Caco-2 (cell line): ENCODE measurements at regions of chr3 and their contacts with region 1.

Region 1: GRCh38 chr3:171129827-171130226 is 103.3 kb upstream of the SLC2A2 start:
- DNase-seq: no peak
- H3K4me3 ChIP-seq: no peak overlapping the region
- H3K4me3 Mint-ChIP-seq: peak overlapping the region; percentile 54
- H3K27ac Mint-ChIP-seq: peak overlapping the region; percentile 92
- H3K4me1 ChIP-seq: peaks cover 49% of the 10 kb centered on the region
- H3K4me1 Mint-ChIP-seq: peaks cover 27% of the 10 kb centered on the region
- H3K27me3 ChIP-seq: no peaks in the 10 kb centered on the region
- H3K27me3 Mint-ChIP-seq: no peaks in the 10 kb centered on the region
- CTCF ChIP-seq: no peak

Region 2: DNA sequence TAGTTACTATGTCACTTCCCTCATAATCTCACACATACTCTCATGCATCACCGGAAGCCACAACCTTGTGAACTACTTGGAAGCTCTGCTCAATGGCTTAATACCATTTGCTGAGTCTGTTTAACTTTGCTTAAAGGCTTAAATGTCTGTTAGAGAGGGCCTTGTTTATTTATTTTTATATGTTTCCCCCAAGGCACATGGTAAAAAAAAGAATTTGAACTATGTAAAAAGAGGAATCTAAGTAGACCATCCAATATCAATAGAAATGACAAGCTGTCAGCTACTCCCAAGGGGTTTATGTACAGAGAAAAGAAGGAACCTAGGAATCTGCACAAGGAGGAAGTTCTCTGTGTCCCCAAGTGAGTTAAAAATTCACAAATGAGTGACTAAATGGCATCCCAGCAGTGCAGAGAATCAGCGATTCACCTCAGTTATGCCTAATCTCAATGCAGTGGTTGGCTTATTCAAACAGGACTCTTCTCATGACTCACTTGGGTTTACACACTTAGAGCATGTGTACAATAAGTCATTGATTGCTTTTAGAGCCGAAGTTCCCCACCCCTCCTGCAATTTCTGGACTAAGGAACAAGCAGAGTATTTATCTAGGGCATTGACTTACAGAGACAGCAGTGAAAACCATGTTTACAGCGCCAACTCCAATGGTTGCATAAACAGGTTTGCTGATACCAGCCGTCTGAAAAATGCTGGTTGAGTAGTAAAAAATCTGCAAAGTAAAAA is 127.7 kb before region 1 on chr3:
- CTCF ChIA-PET with region 1: no interaction called
- POLR2A ChIA-PET with region 1: no interaction called
- intact Hi-C with region 1: loop called (anchors 1 kb)
- DNase-seq: peak; percentile 84 to 87
- H3K4me3 ChIP-seq: peak overlapping the region; percentile 14; the same call in 1 of the 2 replicates
- H3K4me3 Mint-ChIP-seq: peak overlapping the region; percentile 62
- H3K27ac Mint-ChIP-seq: peak overlapping the region; percentile 61
- H3K4me1 ChIP-seq: peaks cover 62% of the 10 kb centered on the region
- H3K4me1 Mint-ChIP-seq: peaks cover 24% of the 10 kb centered on the region
- H3K27me3 ChIP-seq: no peaks in the 10 kb centered on the region
- H3K27me3 Mint-ChIP-seq: no peaks in the 10 kb centered on the region
- CTCF ChIP-seq: no peak

Region 3: DNA sequence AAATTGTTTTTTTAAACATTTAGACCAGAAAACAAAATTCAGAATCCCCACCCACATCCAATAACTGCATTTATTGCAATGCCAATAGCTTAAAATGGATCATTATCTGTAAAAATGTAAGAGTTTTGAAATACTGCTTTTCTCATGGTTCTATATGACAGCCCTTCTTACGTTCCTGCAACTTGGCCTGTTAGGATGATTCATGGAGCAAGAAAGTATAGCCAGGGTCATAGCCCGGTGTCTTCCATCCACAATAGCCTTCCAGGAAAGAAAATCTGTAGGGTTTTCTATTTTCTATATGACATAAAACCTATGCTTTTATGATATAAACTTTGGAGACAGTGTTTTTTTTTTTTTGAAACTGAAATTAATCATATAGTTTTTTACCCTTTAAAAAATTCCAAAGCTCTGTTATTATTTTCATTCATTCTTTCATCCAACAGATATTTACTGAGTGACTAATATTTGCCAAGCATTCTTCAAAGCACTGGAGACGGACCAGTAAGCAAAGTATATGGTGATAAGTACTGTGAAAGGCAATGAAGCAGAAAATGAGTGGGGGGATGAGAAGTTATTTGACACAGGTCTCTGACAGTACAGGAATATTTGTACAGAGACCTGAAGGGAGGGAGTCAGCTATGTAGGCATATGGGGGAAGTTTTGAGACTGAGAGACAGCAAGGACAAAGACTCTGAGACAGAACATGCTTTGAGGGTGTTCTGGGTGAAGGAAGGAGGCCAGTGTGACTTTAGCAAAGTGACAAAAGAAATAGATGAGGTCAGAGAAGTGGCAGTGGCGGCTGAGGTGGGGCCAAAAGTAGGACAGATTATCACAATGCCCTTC is 74.3 kb before region 1 on chr3:
- CTCF ChIA-PET with region 1: no interaction called
- POLR2A ChIA-PET with region 1: no interaction called
- intact Hi-C with region 1: loop called (anchors 1 kb)
- DNase-seq: peak; percentile 44 to 56
- H3K4me3 ChIP-seq: no peak overlapping the region
- H3K4me3 Mint-ChIP-seq: no peak overlapping the region
- H3K27ac Mint-ChIP-seq: no peak overlapping the region
- H3K4me1 ChIP-seq: peaks cover 73% of the 10 kb centered on the region
- H3K4me1 Mint-ChIP-seq: peaks cover 9% of the 10 kb centered on the region
- H3K27me3 ChIP-seq: no peaks in the 10 kb centered on the region
- H3K27me3 Mint-ChIP-seq: no peaks in the 10 kb centered on the region
- CTCF ChIP-seq: no peak

Region 4: DNA sequence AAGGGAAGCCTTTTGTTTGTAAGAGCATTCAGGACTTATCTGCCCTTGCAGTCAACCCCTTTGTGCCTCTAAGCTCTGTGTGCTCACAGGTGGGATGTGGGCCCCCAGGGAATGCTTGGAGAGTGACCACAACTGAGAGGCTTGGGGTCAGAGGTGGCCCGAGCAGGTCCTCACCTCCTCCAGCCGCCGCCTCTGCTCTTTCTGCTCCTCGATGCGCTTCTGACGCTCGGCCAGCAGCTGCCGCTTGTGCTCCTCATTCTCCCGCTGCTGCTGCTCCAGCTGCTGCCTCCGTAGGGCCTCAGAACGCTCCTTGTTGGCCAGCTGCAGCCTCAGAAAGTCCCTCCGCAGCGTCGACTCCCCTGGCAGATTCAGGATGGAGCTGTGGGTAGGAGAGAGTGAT is 27.5 kb after region 1 on chr3:
- CTCF ChIA-PET with region 1: no interaction called
- POLR2A ChIA-PET with region 1: no interaction called
- intact Hi-C with region 1: loop called (anchors 1 kb)
- DNase-seq: peak; percentile 82 to 89
- H3K4me3 ChIP-seq: no peak overlapping the region
- H3K4me3 Mint-ChIP-seq: no peak overlapping the region
- H3K27ac Mint-ChIP-seq: peak overlapping the region; percentile 97
- H3K4me1 ChIP-seq: peaks cover 31% of the 10 kb centered on the region
- H3K4me1 Mint-ChIP-seq: peaks cover 17% of the 10 kb centered on the region
- H3K27me3 ChIP-seq: no peaks in the 10 kb centered on the region
- H3K27me3 Mint-ChIP-seq: no peaks in the 10 kb centered on the region
- CTCF ChIP-seq: no peak

Region 5: DNA sequence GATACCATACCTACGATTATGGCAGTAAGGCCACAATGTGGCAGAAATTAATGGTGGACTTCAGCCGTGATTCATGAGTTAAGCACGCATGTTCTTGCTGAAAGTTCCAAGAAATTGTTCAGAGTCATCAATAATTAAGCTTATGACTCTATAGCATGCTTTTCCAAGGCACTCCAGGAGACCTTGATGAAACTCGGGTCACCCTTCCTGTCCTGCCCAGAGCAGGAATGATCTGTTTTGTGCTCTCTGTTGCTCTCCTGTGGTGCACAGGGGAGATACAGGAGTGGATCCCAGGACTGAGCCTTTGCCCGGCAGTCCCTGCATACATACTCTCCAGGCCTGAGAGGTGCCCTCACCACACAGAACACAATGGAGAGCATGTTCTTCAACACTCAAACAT is 38.3 kb after region 1 on chr3:
- CTCF ChIA-PET with region 1: no interaction called
- POLR2A ChIA-PET with region 1: no interaction called
- intact Hi-C with region 1: loop called (anchors 1 kb)
- DNase-seq: peak; percentile 52 to 68
- H3K4me3 ChIP-seq: no peak overlapping the region
- H3K4me3 Mint-ChIP-seq: no peak overlapping the region
- H3K27ac Mint-ChIP-seq: no peak overlapping the region
- H3K4me1 ChIP-seq: peaks cover 48% of the 10 kb centered on the region
- H3K4me1 Mint-ChIP-seq: peaks cover 17% of the 10 kb centered on the region
- H3K27me3 ChIP-seq: no peaks in the 10 kb centered on the region
- H3K27me3 Mint-ChIP-seq: no peaks in the 10 kb centered on the region
- CTCF ChIP-seq: peak; percentile 34 to 49

Region 6: GRCh38 chr3:171809821-171810628 is 680.2 kb after region 1 on chr3 and contains the start of gene PLD1:
- CTCF ChIA-PET with region 1: no interaction called
- POLR2A ChIA-PET with region 1: no interaction called
- intact Hi-C with region 1: loop called (anchors 1 kb)
- DNase-seq: peak; percentile 87 to 88
- H3K4me3 ChIP-seq: peak within 1 kb of the TSS; percentile 90
- H3K4me3 Mint-ChIP-seq: peak within 1 kb of the TSS; percentile 87
- H3K27ac Mint-ChIP-seq: peak within 1 kb of the TSS; percentile 83
- H3K4me1 ChIP-seq: peaks cover 37% of the 10 kb centered on the region
- H3K4me1 Mint-ChIP-seq: peaks cover 28% of the 10 kb centered on the region
- H3K27me3 ChIP-seq: no peaks in the 10 kb centered on the region
- H3K27me3 Mint-ChIP-seq: no peaks in the 10 kb centered on the region
- CTCF ChIP-seq: no peak
- total RNA-seq, gene PLD1: 5.3 and 5.5 TPM in 2 replicates